Lower leg skin (tissue), 4 donors: ENCODE measurements at regions of chr11 and their contacts with region 1.

Region 1: DNA sequence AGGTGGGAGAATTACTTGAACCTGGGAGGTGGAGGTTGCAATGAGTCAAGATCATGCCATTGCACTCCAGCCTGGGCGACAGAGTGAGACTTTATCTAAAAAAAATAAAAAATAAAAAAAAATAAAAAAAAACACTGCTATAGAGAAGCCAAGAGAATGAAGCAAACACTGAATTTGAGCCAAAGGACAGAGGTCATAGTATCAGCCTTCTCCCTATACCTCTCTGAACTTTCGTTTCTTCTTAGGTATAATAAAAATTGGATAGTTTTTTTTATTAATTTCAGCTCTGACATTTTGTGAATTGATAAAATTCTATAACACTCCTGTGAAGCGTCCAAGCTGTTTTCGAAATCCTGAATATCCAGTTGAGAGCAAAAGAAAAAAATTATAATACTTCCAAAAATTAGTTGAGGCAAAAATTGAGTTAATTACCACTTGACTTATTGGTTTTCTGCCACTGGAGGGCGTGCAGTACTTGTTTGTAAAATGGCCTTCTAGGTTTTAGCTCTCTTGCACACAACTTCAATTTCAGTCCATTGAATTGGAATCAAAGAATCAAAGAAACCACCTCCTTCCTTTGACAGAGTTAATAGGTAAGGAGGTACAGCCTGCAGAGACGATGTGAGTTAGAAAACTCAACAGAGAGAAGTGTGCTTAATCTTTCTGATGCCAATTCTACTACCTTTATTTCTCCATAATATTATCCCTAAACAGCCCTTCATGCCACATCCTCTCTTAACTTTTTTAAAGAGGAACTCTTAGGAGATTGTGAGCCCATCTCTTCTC is 143.2 kb downstream of the BBOX1 start:
- DNase-seq: peak in 1 of 2 donors; percentile 53
- H3K4me3 ChIP-seq: no peak overlapping the region
- CTCF ChIP-seq: peak in 1 of 3 donors; percentile 64
- POLR2A ChIP-seq: no peak

Region 2: DNA sequence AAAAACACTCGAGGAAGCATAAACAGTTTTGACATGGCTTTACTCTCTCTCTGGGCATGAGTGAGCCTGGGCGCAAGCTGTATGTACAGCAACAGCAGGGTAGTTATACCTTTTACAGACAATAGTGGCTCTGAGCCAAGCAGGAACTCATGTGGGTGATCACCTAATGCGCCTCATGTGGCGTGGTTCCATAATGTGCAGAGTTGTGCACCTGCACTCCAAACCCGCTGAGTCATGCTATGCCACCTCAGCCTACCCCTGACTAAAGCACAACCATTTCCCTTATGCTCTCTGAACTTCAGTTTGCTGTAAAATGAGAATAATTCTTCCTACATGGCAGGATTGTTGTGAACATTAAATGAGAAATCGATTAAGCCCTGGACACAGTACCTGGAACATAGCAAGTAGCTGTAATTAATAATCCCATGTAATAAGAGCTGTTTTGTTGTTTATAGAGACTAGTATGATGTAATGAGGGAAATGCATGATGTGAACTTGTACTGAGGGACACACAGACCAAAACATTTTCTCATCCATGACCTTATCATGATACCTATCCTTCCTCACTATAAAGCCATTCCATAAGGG is 107.5 kb after region 1 on chr11:
- intact Hi-C with region 1: loop called (anchors 5 kb)
- DNase-seq: no peak
- H3K4me3 ChIP-seq: no peak overlapping the region
- CTCF ChIP-seq: no peak
- POLR2A ChIP-seq: no peak

Region 3: DNA sequence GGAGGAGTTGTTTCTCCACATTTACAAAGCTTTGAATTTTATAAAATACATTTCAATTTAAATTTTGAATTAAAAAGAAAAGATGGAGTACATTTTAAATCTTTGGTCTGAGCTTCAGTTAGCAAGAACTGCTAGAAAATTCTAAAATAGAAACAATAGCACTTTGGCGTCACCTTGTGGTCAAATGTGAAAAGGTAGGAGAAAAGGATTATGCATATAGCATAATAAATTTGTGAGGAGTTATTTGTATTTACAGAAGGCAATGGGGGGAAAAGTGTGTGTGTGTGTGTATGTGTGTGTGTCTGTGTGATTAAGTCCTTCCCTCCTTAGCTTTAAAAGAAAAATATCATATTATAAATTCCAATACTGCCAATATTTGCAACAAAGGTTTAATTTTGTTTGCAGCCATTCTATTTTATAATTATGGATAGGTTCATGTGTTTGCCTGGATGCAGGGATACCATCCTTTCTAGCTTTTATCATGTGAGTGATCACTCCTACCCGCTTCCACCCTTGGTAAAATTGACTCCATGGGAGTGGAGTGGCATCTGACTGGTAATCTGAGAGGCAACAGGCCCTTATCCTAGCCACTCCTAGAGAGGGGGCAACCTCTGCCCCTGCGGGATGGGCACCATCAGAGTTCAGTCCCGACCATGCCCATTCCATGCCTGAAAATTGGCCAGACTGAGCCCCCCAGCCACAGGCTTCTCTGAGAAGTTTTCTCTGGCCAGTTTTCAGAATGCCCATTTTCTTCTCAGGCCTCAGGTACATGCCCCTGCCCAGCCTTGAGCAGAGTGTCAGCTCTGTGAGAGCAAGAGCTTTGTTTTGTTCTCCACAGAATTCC is 302.3 kb after region 1 on chr11:
- intact Hi-C with region 1: loop called (anchors 5 kb)
- DNase-seq: peak in 1 of 2 donors; percentile 55
- H3K4me3 ChIP-seq: no peak overlapping the region
- CTCF ChIP-seq: peak in 1 of 3 donors; percentile 84
- POLR2A ChIP-seq: no peak